ENCODE measurements at regions of chr6 and their contacts with region 1.

Region 1: GRCh38 chr6:28895134-28895812 is 28.5 kb downstream of the TRIM27 start:
- DNase-seq: peak; percentile 87

Region 2: DNA sequence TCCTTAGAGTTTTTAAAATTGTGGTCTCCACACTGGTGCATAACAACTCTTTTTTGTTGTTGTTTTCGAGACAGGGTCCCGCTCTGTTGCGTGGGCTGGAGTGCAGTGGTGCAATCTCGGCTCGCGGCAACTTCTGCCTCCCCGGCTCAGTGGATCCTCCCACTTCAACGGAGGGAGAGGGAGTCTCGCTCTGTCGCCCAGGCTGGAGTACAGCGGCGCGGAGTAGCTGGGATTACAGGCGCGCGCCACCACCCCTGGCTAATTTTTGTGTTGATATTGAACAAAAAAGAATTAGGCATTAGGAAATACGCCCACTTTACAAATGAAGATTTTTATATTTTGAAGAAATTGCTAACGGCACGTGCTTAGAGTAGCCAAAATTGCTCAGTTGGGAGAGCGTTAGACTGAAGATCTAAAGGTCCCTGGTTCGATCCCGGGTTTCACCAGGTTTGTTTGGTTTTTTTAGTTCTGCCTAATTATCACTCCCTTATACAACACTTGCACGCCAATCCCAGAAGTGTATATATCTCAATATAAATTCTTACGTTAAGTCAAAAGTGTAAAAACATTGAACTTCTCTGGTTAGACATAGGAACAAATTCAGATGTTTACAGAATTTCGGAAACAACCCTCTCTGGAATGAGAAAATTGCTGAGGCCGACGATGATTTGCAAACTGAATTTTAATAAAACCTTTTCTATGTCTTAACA is 131.1 kb before region 1 on chr6:
- CTCF ChIA-PET with region 1: no interaction called
- POLR2A ChIA-PET with region 1: no interaction called
- DNase-seq: no peak

Region 3: DNA sequence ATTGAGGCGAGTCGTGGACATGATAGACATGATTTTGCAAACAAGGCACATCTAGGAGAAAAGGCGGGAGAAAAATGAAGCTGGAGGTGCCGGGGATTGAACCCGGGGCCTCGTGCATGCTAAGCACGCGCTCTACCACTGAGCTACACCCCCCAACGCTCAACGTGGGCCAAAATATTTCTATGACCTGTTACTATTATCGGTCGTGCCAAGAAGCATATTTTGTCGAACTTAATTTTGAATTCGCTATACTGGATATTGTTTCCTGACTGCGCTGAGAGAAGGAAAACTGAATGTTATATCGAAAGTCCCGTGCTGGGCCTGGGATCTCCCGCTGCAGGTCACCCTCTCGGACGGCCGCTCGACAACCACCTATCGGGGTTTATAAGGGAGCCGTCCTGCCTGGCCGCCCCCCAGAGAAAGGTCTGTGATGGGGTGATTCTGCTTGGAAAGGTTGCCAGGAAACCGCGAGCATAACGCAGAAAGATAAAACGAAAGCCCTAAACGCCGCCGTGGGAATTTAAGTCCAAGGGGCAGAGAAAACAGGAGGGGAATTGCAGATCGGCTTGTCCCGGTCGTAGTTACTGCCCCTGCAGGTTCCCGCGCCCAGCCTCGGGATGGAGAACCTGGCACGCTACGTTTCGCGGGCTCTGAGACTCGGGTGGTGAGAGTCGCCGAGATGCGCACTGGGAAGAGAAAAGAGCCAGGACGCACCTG is 31.5 kb before region 1 on chr6:
- CTCF ChIA-PET with region 1: no interaction called
- POLR2A ChIA-PET with region 1: interaction called, 36 read pairs
- DNase-seq: peak; percentile 49

Region 4: DNA sequence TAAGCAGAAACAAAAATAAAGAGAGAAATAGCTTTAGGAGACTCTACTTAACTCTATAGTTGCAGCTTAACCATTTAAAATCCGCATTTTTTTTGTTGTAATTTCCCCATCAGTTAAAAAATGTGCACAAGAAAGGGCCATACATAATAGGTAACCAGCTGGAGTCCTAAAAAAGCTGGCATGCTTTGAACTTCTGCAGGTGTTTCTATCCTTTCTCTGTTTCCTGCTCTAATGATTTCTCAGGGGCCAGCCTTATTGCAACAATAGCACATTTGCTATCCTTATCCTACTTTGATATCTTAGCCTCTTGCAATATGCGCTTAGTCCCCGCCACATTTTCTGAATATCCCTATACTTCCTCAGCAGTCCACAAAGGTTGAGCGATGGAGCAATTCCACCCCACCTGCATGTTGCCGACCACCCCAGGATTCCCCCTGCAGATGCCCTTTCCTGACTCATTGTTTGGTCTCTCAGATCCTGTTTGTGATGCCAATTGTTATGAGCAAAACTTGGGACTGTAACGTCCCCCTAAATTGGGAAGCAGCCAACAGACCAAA is 20.0 kb before region 1 on chr6:
- CTCF ChIA-PET with region 1: no interaction called
- POLR2A ChIA-PET with region 1: interaction called, 26 read pairs
- DNase-seq: no peak

Region 5: DNA sequence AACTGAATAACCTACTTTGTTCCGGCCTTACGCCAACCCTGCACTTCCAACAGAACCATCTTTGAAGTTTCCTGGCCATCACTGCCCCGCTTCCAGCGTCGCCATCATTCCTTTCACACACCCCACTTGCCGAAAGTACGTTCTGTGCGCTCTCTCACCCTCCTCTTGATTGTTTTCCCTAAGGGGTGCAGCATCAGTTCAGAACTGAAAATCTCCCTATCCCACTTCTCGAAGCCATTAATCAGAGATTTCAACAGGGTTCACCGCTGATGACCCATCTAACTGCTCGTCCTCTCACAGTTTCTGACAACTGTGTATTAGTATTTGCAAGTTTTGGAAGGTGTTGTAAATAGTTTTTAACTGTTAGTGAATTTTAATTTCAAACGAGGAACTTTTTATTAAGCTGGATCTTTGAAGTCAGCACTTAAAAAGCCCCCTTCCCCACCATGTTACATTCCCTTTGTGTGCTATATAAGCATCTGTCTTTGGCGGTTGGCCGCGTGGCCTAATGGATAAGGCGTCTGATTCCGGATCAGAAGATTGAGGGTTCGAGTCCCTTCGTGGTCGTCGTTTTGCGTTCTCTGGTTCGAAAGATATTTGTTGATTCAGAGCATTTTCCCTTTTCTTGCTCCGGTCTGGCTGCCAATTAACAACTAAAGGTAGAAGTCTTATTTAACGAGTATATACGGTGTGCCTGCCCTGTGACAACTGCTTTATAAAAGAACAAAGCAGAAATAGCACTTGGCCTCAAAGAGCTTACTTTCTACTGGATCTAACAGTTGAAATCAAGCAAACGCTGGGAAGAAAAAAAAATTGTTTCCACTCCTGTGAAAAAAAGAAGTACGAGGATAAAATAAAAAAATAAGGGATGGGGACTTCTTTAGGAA is 14.1 kb before region 1 on chr6:
- CTCF ChIA-PET with region 1: no interaction called
- POLR2A ChIA-PET with region 1: interaction called, 26 read pairs
- DNase-seq: peak; percentile 61

Region 6: DNA sequence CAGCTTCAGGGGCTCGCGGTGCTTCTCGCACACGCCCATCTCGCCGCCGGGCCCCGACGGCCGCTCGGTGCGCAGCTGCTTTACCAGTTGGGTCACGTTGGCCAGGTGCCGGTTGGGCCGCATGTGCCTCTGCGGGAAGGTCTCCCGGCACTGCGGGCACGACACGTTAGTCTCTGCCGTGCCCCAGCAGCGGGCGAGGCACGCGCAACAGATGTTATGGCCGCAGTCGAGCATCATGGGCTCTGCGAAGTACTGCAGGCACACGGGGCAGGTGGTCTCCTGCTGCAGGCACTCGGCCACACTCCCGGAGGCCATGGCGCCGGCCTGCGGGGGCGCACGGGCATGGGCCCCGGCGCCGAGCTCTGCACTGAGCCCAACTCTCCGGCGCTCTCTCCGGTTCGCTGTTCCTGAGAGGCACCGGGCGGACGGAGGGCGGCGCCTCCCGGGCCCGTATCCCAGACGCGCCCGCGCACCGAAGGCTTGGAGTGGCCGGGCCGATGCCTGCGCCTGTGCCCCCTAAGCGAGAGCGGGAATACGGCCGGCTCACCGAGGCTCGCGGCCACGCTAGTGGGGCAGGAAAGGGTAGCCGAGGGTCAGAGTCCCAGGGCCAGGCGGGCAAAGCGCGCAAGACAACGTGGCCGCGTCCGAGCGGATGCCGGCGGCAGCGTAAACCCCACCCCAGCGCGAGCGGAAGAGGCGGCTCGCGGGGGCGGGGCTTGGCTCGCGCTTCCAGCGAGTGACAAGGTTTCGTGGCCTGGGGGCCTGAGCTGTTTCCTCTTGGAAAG is 28.2 kb after region 1 on chr6 and contains the start of gene TRIM27:
- CTCF ChIA-PET with region 1: interaction called, 7 read pairs
- POLR2A ChIA-PET with region 1: interaction called, 44 read pairs
- DNase-seq: peak; percentile 86

Region 7: DNA sequence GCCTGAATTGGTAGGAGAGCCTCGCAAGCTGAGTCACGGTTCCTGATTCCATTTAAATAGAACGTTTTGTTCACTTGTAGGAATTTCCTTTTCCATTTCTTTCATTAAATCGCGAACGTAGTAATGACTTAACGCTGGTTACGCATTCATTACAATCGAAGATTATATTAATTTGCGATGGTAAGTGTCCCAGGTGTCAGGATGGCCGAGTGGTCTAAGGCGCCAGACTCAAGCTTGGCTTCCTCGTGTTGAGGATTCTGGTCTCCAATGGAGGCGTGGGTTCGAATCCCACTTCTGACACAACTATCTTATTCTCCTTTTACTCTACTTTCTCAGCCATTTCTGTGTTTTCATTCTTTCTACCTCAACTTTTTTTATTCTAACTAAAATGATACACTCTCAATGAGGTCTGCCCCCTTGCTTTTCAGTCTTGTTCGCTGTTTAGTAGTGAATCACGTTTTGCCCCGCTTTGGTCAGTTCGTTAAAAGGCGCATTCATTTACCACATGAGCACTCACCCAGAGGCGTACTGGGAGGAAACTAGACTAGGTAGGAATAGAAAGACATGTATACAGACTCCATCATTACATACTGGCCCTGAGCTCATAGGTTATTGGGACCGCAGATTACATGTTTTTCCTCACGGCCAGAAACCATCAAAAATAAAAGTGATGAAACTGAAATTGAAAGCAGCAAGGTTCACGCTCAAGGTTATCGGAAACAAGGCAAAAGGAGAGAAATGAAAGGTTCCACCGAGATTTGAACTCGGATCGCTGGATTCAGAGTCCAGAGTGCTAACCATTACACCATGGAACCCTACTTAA is 45.8 kb after region 1 on chr6:
- CTCF ChIA-PET with region 1: no interaction called
- POLR2A ChIA-PET with region 1: interaction called, 10 read pairs
- DNase-seq: peak; percentile 51

Region 8: DNA sequence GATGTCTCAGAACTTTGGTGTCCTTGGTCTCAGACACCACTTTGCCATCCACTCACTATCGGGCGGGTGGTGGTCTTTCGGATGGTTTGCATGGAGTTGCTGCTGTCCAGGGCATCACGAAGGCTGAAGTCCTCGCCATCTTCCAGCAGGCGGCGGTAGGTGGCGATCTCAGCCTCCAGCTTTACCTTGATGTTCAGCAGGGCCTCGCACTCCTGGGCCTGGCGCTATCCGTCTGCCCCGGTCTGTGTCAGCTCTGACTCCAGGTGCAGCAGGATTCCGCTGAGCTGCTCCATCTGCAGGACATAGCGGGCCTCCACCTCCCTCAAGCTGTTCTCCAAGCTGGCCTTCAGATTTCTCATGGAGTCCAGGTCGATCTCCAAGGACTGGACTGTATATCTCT is 73.9 kb after region 1 on chr6:
- CTCF ChIA-PET with region 1: no interaction called
- POLR2A ChIA-PET with region 1: no interaction called
- DNase-seq: no peak

Region 9: GRCh38 chr6:28981833-28982475 is 86.7 kb after region 1 on chr6:
- CTCF ChIA-PET with region 1: no interaction called
- POLR2A ChIA-PET with region 1: interaction called, 13 read pairs
- DNase-seq: peak; percentile 69

Measured in HEK293T (cell line).